CD8-positive, alpha-beta memory T cell (primary cell): ENCODE measurements at regions of chr1 and their contacts with region 1.

Region 1: GRCh38 chr1:52726265-52727113 is at the start of gene ZYG11B:
- DNase-seq: peak; percentile 87 to 93 (median 89)
- H3K4me3 ChIP-seq: peak within 1 kb of the TSS; percentile 87
- H3K4me3 Mint-ChIP-seq: peak within 1 kb of the TSS; percentile 83 to 97 (median 93)
- H3K27ac ChIP-seq: peak within 1 kb of the TSS; percentile 76
- H3K27ac Mint-ChIP-seq: peak within 1 kb of the TSS; percentile 84 to 95 (median 90)
- H3K4me1 ChIP-seq: peaks cover 18% of the 10 kb centered on the region
- H3K4me1 Mint-ChIP-seq: peaks cover 33 to 45% (median 40%) of the 10 kb centered on the region in 3 donors
- H3K27me3 ChIP-seq: no peaks in the 10 kb centered on the region
- H3K27me3 Mint-ChIP-seq: peaks cover 3 to 12% of the 10 kb centered on the region in 2 donors
- total RNA-seq, gene ZYG11B: 11.2 to 11.9 TPM

Region 2: DNA sequence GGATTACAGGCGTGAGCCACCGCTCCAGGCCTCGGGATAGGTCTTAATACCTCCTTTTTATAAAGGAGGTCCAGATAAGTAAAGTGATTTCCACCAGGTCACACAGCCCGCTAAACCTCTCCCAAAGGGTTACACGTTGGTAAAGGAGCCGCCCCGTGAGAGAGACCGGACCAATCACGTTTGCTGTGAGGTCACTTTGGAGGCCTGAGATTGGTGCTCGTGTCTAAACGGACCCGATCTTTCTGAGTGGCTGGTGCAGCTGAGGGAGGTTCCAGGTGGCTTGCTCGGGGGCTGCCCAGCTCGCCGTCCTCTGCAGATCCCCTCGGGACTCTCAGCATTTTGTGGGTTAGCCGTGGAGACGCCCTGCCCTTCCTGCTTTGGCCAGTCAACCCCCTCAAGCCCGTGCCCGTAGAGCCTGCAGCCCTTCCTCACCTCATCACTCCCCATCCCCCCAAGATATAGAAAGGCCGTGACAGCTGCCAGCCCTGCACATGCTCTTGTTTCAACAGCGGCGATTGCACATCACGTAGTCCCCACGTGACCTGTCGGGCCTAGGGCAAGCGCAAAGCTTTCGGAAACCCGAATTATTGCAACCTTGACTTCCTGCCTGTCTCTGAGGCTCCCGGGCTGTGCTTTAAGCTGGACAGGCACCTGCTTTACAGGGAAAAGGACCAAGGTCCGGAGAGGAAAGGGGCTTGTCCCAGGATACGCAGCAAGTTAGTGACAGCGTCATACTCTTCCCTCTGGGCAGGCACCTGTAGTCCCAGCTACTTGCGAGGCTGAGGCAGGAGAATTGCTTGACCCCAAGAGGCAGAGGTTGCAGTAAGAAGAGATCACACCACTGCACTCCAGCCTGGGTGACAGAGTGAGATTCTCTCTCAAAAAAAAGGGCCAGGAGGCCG is 23.4 kb before region 1 on chr1:
- CTCF ChIA-PET with region 1: interaction called, 5 read pairs
- POLR2A ChIA-PET with region 1: interaction called, 15 read pairs
- DNase-seq: peak; percentile 62 to 87 (median 79)
- H3K4me3 ChIP-seq: peak overlapping the region; percentile 40
- H3K4me3 Mint-ChIP-seq: peak overlapping the region; percentile 73 to 94 (median 90)
- H3K27ac ChIP-seq: peak overlapping the region; percentile 61
- H3K27ac Mint-ChIP-seq: peak overlapping the region; percentile 76 to 99 (median 95)
- H3K4me1 ChIP-seq: peaks cover 16% of the 10 kb centered on the region
- H3K4me1 Mint-ChIP-seq: peaks cover 21 to 32% (median 26%) of the 10 kb centered on the region in 3 donors
- H3K27me3 ChIP-seq: no peaks in the 10 kb centered on the region
- H3K27me3 Mint-ChIP-seq: peaks cover under 1 to 2% of the 10 kb centered on the region in 2 donors

Region 3: GRCh38 chr1:52927212-52928014 is 200.9 kb after region 1 on chr1 and contains the start of gene SCP2:
- CTCF ChIA-PET with region 1: no interaction called
- POLR2A ChIA-PET with region 1: interaction called, 10 read pairs
- DNase-seq: peak; percentile 64 to 81 (median 71)
- H3K4me3 ChIP-seq: peak within 1 kb of the TSS; percentile 68
- H3K4me3 Mint-ChIP-seq: peak within 1 kb of the TSS; percentile 84 to 96 (median 91)
- H3K27ac ChIP-seq: peak within 1 kb of the TSS; percentile 49
- H3K27ac Mint-ChIP-seq: peak within 1 kb of the TSS; percentile 37 to 95 (median 84)
- H3K4me1 ChIP-seq: peaks cover 15% of the 10 kb centered on the region
- H3K4me1 Mint-ChIP-seq: peaks cover 21 to 36% (median 33%) of the 10 kb centered on the region in 3 donors
- H3K27me3 ChIP-seq: no peaks in the 10 kb centered on the region
- H3K27me3 Mint-ChIP-seq: peaks cover 0 to 1% of the 10 kb centered on the region in 2 donors
- total RNA-seq, gene SCP2: 66.0 to 69.0 TPM